ENCODE measurements at regions of chr9 and their contacts with region 1.

Region 1: GRCh38 chr9:34637356-34638137 is at the start of gene SIGMAR1:
- DNase-seq: peak; percentile 94
- H3K4me3 Mint-ChIP-seq: peak within 1 kb of the TSS; percentile 94
- H3K27ac Mint-ChIP-seq: peak within 1 kb of the TSS; percentile 80
- H3K4me1 Mint-ChIP-seq: peaks cover 41% of the 10 kb centered on the region
- H3K27me3 Mint-ChIP-seq: no peaks in the 10 kb centered on the region
- total RNA-seq, gene SIGMAR1: 65.9 to 67.6 TPM

Region 2: GRCh38 chr9:34328987-34329832 is 308.3 kb before region 1 on chr9 and contains the starts of genes KIF24 and NUDT2:
- CTCF ChIA-PET with region 1: no interaction called
- POLR2A ChIA-PET with region 1: no interaction called
- intact Hi-C with region 1: loop called (anchors 10 kb)
- DNase-seq: peak; percentile 98
- H3K4me3 Mint-ChIP-seq: peak within 1 kb of the TSS; percentile 97
- H3K27ac Mint-ChIP-seq: peak within 1 kb of the TSS; percentile 94
- H3K4me1 Mint-ChIP-seq: peaks cover 30% of the 10 kb centered on the region
- H3K27me3 Mint-ChIP-seq: no peaks in the 10 kb centered on the region
- total RNA-seq, gene KIF24: 5.6 to 5.7 TPM
- total RNA-seq, gene NUDT2: 42.4 to 43.3 TPM

Region 3: GRCh38 chr9:34603610-34604231 is 33.8 kb before region 1 on chr9:
- CTCF ChIA-PET with region 1: interaction called, 49 read pairs
- POLR2A ChIA-PET with region 1: no interaction called
- intact Hi-C with region 1: no loop called
- DNase-seq: peak; percentile 85
- H3K4me3 Mint-ChIP-seq: no peak overlapping the region
- H3K27ac Mint-ChIP-seq: no peak overlapping the region
- H3K4me1 Mint-ChIP-seq: no peaks in the 10 kb centered on the region
- H3K27me3 Mint-ChIP-seq: no peaks in the 10 kb centered on the region

Region 4: DNA sequence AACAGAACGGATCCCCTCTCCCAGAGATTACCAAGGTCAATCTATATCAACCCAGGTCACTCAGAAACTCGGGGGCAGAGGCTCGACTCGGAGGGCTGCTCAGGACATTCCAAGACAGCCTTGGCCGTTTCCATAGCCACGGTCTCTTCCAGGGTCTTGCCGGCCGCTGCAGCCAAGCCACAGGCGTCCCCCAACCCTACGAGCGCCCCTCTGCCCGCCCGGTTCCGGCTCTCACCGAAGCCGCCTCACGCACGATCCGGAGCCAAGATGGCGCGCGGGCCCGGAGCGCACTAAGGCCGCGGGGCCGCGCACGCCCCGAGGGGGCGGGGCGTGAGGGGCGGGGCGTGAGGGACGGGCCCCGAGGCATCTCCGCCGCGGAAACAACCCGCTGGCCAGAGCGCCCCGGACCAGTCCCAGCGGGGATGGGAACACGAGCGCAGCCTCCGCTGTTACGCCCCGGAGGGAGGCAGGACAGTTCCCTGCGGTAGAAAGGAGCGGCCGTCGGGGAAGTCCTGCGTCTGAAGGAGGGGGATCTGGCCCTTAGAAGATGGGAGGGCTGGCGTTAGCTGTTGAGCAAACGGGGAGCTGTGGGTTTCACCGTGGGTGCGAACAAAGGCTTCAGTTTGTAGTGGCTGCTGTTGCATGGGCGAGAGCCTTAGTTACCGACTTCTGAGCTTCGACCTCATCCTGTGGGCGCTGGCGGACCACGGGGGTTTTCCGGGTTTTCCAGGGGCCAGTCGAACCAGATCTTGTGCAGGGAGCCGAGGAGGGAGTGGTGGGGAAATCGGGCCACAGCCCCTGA is 25.5 kb before region 1 on chr9 and contains the start of gene RPP25L:
- CTCF ChIA-PET with region 1: interaction called, 135 read pairs
- POLR2A ChIA-PET with region 1: interaction called, 5 read pairs
- intact Hi-C with region 1: loop called (anchors 1 kb)
- DNase-seq: peak; percentile 88
- H3K4me3 Mint-ChIP-seq: peak within 1 kb of the TSS; percentile 89
- H3K27ac Mint-ChIP-seq: peak within 1 kb of the TSS; percentile 85
- H3K4me1 Mint-ChIP-seq: peaks cover 21% of the 10 kb centered on the region
- H3K27me3 Mint-ChIP-seq: no peaks in the 10 kb centered on the region
- total RNA-seq, gene RPP25L: 29.3 to 31.1 TPM

Region 5: DNA sequence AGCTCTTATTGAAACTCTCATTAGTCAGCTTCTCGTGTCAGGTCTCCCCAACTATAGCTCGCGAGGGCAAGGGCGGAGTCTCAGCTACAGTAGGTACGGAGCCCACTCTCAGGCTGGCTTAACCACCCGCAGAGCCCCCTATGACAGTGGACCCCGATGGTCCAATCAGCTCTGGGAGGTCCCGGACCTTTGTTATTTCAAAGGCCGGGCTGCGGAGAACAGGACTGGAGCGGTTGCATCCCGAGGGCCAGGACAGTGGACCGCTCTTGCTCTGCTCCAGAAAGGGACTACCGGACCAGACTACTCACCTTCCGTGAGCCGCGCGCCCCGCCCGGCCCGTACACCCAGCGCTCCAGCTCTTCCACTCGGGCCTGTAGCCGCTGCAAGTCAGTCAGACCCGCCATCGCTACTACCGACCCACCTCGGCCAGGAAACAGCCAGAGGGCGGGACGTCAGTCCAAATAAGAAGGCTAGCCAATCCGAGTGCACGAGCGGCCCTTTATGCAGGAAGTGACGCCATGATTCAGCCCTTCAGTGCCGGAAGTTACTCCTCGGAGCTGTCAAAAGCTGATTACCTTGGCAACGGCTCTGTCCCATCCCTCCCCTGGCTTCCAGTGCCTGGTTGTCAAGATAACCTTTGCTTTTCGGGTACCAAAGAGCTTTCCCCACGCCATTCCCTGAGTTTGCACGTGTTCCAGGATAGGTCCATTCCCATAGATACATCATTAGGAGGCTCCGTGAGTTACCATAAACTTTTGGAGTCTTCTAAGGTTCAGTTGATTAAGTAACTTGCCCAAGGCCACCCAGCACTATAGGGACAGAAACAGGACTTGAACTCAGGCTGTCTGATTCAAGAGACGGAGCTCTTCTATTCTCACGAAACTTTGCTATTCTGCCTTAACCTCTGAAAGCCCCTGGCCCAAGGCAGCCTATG is 17.2 kb before region 1 on chr9 and contains the start of gene DCTN3:
- CTCF ChIA-PET with region 1: interaction called, 135 read pairs
- POLR2A ChIA-PET with region 1: interaction called, 22 read pairs
- intact Hi-C with region 1: loop called (anchors 1 kb)
- DNase-seq: peak; percentile 95
- H3K4me3 Mint-ChIP-seq: peak within 1 kb of the TSS; percentile 93
- H3K27ac Mint-ChIP-seq: peak within 1 kb of the TSS; percentile 52
- H3K4me1 Mint-ChIP-seq: peaks cover 26% of the 10 kb centered on the region
- H3K27me3 Mint-ChIP-seq: peaks cover 25% of the 10 kb centered on the region
- total RNA-seq, gene DCTN3: 85.3 to 87.3 TPM

Region 6: GRCh38 chr9:34710023-34710422 is 72.5 kb after region 1 on chr9 and contains the start of gene CCL21:
- CTCF ChIA-PET with region 1: no interaction called
- POLR2A ChIA-PET with region 1: no interaction called
- intact Hi-C with region 1: no loop called
- DNase-seq: no peak
- H3K4me3 Mint-ChIP-seq: no peak within 1 kb of the TSS
- H3K27ac Mint-ChIP-seq: no peak within 1 kb of the TSS
- H3K4me1 Mint-ChIP-seq: no peaks in the 10 kb centered on the region
- H3K27me3 Mint-ChIP-seq: peaks cover 11% of the 10 kb centered on the region
- total RNA-seq, gene CCL21: not detected

Measured in activated CD4-positive, alpha-beta memory T cell treated with anti-CD3 and anti-CD28 coated beads for 36 hours (primary cell).